Heart left ventricle (tissue), 16 donors: ENCODE measurements at regions of chr2 and their contacts with region 1.

Region 1: GRCh38 chr2:46601328-46601963 is 122.1 kb downstream of the TMEM247 start:
- DNase-seq: no peak
- ATAC-seq: no peak
- H3K4me3 ChIP-seq: no peak overlapping the region
- H3K27ac ChIP-seq: no peak overlapping the region
- H3K4me1 ChIP-seq: peaks cover 0 to 5% (median 0%) of the 10 kb centered on the region in 12 donors
- H3K27me3 ChIP-seq: no peaks in the 10 kb centered on the region
- CTCF ChIP-seq: peak; percentile 34 to 65 (median 49)
- POLR2A ChIP-seq: no peak

Region 2: GRCh38 chr2:46469116-46469515 is 132.3 kb before region 1 on chr2:
- intact Hi-C with region 1: loop called in 2 of 10 experiments (anchors 5 kb)
- DNase-seq: peak in 1 of 5 donors; percentile 3
- ATAC-seq: no peak
- H3K4me3 ChIP-seq: no peak overlapping the region
- H3K27ac ChIP-seq: no peak overlapping the region
- H3K4me1 ChIP-seq: peaks cover 0 to 17% (median 2%) of the 10 kb centered on the region in 12 donors
- H3K27me3 ChIP-seq: no peaks in the 10 kb centered on the region
- CTCF ChIP-seq: no peak
- POLR2A ChIP-seq: no peak

Region 3: GRCh38 chr2:46490521-46491141 is 110.8 kb before region 1 on chr2:
- intact Hi-C with region 1: loop called in 3 of 10 experiments (anchors 5 to 10 kb)
- DNase-seq: peak; percentile 64 to 86 (median 79)
- ATAC-seq: peak; percentile 56 to 89 (median 72)
- H3K4me3 ChIP-seq: no peak overlapping the region
- H3K27ac ChIP-seq: peak overlapping the region; percentile 3 to 93 (median 79)
- H3K4me1 ChIP-seq: peaks cover 0 to 55% (median 44%) of the 10 kb centered on the region in 12 donors
- H3K27me3 ChIP-seq: no peaks in the 10 kb centered on the region
- CTCF ChIP-seq: peak in 9 of 12 donors; percentile 3 to 54 (median 31)
- POLR2A ChIP-seq: no peak

Region 4: DNA sequence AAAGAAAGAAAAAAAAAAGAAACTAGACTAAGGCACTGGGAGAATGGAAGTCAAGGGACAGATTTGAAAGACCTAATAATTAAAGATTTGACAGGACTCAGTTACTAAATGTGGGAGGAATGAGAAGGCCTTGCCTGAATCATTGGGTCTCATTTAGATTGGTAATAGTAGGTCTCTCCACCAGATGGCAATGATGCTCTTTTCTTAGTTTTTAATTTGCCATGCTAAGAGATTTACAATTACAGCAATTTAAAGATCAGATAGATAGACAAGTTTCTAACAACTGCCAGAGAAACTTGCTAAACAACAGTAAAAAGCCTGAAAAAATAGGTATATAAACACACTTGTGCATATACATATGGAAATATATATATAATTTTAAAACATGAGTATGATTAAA is 30.9 kb after region 1 on chr2:
- intact Hi-C with region 1: no loop called
- DNase-seq: no peak
- ATAC-seq: peak in 2 of 4 donors; percentile 37 to 61
- H3K4me3 ChIP-seq: no peak overlapping the region
- H3K27ac ChIP-seq: no peak overlapping the region
- H3K4me1 ChIP-seq: peaks cover 0 to 4% (median 0%) of the 10 kb centered on the region in 12 donors
- H3K27me3 ChIP-seq: no peaks in the 10 kb centered on the region
- CTCF ChIP-seq: peak; percentile 39 to 73 (median 59)
- POLR2A ChIP-seq: no peak

Region 5: GRCh38 chr2:46690825-46691224 is 89.4 kb after region 1 on chr2:
- intact Hi-C with region 1: no loop called
- DNase-seq: no peak
- ATAC-seq: no peak
- H3K4me3 ChIP-seq: no peak overlapping the region
- H3K27ac ChIP-seq: no peak overlapping the region
- H3K4me1 ChIP-seq: no peaks in the 10 kb centered on the region
- H3K27me3 ChIP-seq: no peaks in the 10 kb centered on the region
- CTCF ChIP-seq: no peak
- POLR2A ChIP-seq: no peak